Breast epithelium (tissue), 4 donors: ENCODE measurements at regions of chr20 and their contacts with region 1.

Region 1: DNA sequence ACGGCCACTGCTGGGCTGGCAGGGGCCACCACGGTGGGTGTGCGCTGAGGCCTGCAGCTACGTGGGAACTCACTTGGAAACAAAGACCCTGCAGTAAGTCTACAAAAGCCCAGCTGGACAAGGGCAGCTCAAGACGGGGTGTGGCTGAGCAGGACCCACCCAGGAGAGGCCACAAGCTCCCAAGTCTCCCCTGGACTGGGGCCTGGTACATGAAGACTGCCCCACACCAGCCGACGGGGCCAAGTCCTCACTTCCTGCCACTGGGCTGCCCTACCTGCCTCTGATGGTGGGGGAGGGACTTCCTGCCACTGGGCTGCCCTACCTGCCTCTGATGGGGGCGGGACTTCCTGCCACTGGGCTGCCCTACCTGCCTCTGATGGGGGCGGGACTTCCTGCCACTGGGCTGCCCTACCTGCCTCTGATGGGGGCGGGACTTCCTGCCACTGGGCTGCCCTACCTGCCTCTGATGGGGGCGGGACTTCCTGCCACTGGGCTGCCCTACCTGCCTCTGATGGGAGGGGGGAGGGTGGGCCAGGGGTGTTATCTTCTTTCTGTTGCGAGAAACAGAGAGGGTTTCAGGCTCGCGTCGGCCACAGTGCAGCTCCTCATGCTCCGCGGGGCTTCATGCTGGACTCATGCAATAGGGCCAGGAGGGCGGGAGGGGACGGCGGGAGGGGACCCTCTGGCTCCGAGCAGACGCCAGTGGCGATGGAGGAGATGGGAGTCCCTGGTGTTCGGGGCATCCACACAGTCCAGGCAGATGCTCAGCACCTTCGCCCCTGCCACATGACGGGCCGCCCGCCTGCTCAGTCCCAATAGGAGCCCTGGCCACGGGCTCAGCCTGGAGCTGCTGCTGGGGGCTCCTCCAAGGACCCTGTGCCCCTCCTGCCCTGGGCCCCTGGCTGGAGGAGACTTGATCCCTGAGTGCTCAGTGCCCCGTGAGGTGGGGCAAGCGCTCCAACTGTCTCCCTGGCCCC is 48.6 kb upstream of the CHRNA4 start:
- DNase-seq: no peak
- H3K4me3 ChIP-seq: no peak overlapping the region
- H3K27ac ChIP-seq: no peak overlapping the region
- H3K4me1 ChIP-seq: no peaks in the 10 kb centered on the region
- H3K27me3 ChIP-seq: peaks cover 0 to 48% of the 10 kb centered on the region in 2 donors
- CTCF ChIP-seq: no peak
- POLR2A ChIP-seq: no peak

Region 2: GRCh38 chr20:62776692-62777527 is 632.8 kb before region 1 on chr20:
- intact Hi-C with region 1: loop called (anchors 5 kb)
- DNase-seq: no peak
- H3K4me3 ChIP-seq: no peak overlapping the region
- H3K27ac ChIP-seq: no peak overlapping the region
- H3K4me1 ChIP-seq: no peaks in the 10 kb centered on the region
- H3K27me3 ChIP-seq: peaks cover 0 to 41% of the 10 kb centered on the region in 2 donors
- CTCF ChIP-seq: no peak
- POLR2A ChIP-seq: no peak

Region 3: GRCh38 chr20:63434599-63435378 is 25.0 kb after region 1 on chr20:
- intact Hi-C with region 1: loop called (anchors 1 kb)
- DNase-seq: peak in 1 of 2 donors; percentile 23
- H3K4me3 ChIP-seq: no peak overlapping the region
- H3K27ac ChIP-seq: no peak overlapping the region
- H3K4me1 ChIP-seq: no peaks in the 10 kb centered on the region
- H3K27me3 ChIP-seq: peaks cover 8 to 53% of the 10 kb centered on the region in 2 donors
- CTCF ChIP-seq: peak; percentile 62 to 73 (median 69)
- POLR2A ChIP-seq: no peak